ENCODE measurements at regions of chr6 and their contacts with region 1.

Region 1: GRCh38 chr6:135128268-135128914 is 52.7 kb upstream of the MYB start:
- DNase-seq: peak; percentile 55
- H3K4me3 Mint-ChIP-seq: peak overlapping the region; percentile 57
- H3K27ac Mint-ChIP-seq: peak overlapping the region; percentile 95
- H3K4me1 Mint-ChIP-seq: peaks cover 47% of the 10 kb centered on the region
- H3K27me3 Mint-ChIP-seq: no peaks in the 10 kb centered on the region

Region 2: DNA sequence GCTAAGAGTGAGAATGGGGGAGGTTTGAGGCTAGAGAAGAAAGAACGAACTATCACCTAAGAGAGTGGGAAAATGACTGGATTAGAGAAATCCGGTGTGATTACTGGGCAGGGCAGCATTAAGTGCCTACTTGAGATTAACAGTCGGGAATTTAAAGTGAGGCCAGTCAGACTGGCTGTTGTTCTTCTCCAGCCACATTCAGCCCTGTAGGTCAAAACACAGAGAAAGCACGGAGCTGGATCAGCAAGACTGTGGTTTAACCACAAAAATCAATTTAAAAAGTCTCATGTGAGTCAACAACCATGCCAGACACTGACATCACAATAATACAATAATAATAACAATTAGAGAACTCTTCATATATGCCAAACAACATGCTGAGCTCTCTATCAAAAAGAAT is 508.6 kb before region 1 on chr6:
- intact Hi-C with region 1: no loop called
- DNase-seq: no peak
- H3K4me3 Mint-ChIP-seq: no peak overlapping the region
- H3K27ac Mint-ChIP-seq: no peak overlapping the region
- H3K4me1 Mint-ChIP-seq: peaks cover 6% of the 10 kb centered on the region
- H3K27me3 Mint-ChIP-seq: peaks cover 5% of the 10 kb centered on the region

Region 3: DNA sequence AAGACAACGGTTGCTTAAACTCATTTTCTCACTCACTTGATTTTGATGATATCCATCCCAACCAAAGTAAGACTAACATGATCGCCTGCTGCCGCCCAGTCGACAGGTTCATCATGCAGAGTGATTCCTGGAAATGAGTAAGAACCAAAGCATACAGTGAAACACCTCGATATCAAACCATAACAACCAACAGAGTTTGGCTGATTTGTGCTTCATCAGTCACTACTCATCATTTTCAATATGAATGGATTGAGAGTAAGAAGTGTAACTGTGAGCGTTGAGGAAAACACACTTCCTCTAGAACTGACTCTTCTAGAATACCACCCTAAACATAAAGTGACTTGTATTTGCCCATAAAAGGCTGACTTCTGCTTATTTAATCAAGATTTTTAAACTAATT is 149.2 kb before region 1 on chr6:
- intact Hi-C with region 1: loop called (anchors 1 kb)
- DNase-seq: peak; percentile 55
- H3K4me3 Mint-ChIP-seq: peak overlapping the region; percentile 57
- H3K27ac Mint-ChIP-seq: peak overlapping the region; percentile 78
- H3K4me1 Mint-ChIP-seq: peaks cover 52% of the 10 kb centered on the region
- H3K27me3 Mint-ChIP-seq: no peaks in the 10 kb centered on the region

Region 4: GRCh38 chr6:135145063-135145800 is 16.8 kb after region 1 on chr6:
- intact Hi-C with region 1: loop called (anchors 2 kb)
- DNase-seq: no peak
- H3K4me3 Mint-ChIP-seq: peak overlapping the region; percentile 55
- H3K27ac Mint-ChIP-seq: peak overlapping the region; percentile 89
- H3K4me1 Mint-ChIP-seq: peaks cover 64% of the 10 kb centered on the region
- H3K27me3 Mint-ChIP-seq: no peaks in the 10 kb centered on the region

Region 5: DNA sequence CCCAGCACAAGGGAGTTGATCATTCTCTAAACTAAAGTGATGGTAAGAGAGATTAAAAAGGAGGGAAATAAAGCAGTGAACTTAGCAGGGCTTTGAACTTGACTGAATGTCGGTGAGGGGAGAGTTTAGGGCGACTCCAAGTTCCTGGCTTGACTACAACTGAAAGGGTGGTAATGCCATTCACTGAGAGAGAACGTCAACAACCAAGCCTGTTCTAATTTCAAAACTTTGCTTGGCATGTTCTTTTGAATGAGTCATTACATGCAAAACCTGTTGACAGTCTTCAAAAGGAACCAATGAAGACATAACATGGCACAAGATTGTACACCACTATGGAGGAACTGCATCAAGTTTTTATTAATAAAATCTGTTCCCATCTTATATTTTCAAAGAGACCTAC is 42.5 kb after region 1 on chr6:
- intact Hi-C with region 1: loop called (anchors 1 kb)
- DNase-seq: no peak
- H3K4me3 Mint-ChIP-seq: peak overlapping the region; percentile 35
- H3K27ac Mint-ChIP-seq: peak overlapping the region; percentile 86
- H3K4me1 Mint-ChIP-seq: peaks cover 43% of the 10 kb centered on the region
- H3K27me3 Mint-ChIP-seq: no peaks in the 10 kb centered on the region